ENCODE measurements at regions of chr12 and their contacts with region 1.

Region 1: DNA sequence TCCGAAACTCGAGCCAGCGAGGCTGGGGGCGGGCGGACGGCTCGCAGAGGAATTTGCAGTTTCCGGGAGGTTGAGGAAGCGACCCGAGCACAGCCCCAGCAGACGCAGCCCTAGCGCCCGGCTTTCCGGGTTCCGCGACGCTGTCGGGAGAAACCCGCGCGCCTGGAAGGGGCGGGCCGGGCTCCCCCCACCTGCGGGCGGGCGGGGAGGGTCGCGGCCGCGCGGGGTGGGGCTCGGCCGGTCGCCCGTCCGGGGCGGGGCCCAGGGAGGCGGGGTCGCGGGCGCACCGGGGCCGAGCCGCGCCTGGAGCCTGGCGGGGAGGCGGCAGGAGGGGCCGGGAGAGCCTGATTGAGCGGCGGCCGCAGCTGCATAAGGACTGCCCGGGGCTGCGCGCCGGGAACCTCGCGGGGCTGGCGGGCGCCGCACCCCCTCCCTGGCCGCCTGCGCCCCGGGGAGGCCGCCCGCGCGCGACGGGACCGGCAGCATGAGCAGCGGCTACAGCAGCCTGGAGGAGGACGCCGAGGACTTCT is at the start of gene RASSF3:
- DNase-seq: peak; percentile 94
- H3K4me3 Mint-ChIP-seq: peak within 1 kb of the TSS; percentile 96
- H3K27ac Mint-ChIP-seq: peak within 1 kb of the TSS; percentile 93
- H3K4me1 Mint-ChIP-seq: peaks cover 36% of the 10 kb centered on the region
- H3K27me3 Mint-ChIP-seq: no peaks in the 10 kb centered on the region
- total RNA-seq, gene RASSF3: 40.8 and 43.1 TPM in 2 replicates

Region 2: GRCh38 chr12:64323476-64324225 is 286.6 kb before region 1 on chr12:
- intact Hi-C with region 1: no loop called
- DNase-seq: no peak
- H3K4me3 Mint-ChIP-seq: no peak overlapping the region
- H3K27ac Mint-ChIP-seq: no peak overlapping the region
- H3K4me1 Mint-ChIP-seq: no peaks in the 10 kb centered on the region
- H3K27me3 Mint-ChIP-seq: peaks cover 2% of the 10 kb centered on the region

Region 3: GRCh38 chr12:64544371-64545080 is 65.7 kb before region 1 on chr12:
- intact Hi-C with region 1: loop called (anchors 1 kb)
- DNase-seq: no peak
- H3K4me3 Mint-ChIP-seq: no peak overlapping the region
- H3K27ac Mint-ChIP-seq: no peak overlapping the region
- H3K4me1 Mint-ChIP-seq: peaks cover 2% of the 10 kb centered on the region
- H3K27me3 Mint-ChIP-seq: peaks cover 9% of the 10 kb centered on the region

Region 4: DNA sequence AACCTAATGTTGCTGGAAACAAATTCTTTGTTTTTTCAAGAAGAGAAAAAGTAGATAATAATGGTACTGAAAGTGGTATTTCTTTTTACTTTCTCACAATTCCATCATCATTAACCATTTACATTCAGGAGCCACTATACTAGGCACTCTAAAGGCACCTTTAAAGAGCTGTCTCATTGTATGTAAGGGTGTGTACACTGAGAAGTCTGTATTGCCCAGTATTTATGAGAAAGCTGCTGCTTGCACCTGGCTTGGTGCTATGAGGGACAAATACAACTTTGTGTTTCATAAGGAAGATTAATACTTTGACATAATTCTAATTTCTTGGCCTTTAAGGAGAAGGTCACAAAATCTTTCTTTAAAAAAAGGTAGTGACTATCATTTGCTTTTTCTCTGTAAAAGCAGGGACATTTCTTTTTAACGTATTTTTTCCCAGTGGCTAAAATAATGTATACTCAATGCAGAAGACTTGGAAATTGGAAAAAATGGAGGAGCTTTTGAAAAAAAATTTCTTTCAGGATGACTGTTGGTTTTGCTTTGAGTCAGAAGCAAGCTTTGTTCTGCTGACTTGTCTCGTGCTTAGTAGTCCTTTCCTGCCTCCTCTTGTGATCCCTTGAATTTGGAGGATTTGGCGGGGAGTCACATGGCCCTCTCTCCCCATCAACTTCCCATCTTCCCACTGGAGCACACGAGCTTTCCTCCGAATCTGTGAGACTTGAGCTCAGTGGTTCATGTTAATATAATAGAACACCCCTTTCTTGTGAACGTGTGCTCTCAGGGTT is 50.2 kb after region 1 on chr12:
- intact Hi-C with region 1: loop called (anchors 1 kb)
- DNase-seq: no peak
- H3K4me3 Mint-ChIP-seq: no peak overlapping the region
- H3K27ac Mint-ChIP-seq: peak overlapping the region; percentile 17
- H3K4me1 Mint-ChIP-seq: peaks cover 54% of the 10 kb centered on the region
- H3K27me3 Mint-ChIP-seq: no peaks in the 10 kb centered on the region

Region 5: DNA sequence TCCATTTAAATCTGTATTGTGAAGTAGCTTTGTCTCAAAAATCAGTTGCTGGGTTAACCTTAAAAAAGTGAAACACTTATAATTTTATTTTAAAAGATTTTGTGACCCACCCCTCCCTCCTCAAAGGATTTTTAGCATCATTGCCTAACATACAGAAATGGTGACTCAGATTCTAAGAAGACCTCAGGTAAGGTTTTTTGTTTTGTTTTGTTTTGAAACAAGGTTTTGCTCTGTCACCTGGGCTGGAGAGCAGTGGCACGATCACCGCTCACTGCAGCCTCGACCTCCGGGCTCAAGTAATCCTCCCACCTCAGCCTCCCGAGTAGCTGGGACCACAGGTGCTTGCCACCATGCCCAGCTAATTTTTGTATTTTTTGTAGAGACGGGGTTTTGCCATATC is 74.8 kb after region 1 on chr12:
- intact Hi-C with region 1: loop called (anchors 2 kb)
- DNase-seq: peak; percentile 72
- H3K4me3 Mint-ChIP-seq: peak overlapping the region; percentile 13
- H3K27ac Mint-ChIP-seq: peak overlapping the region; percentile 88
- H3K4me1 Mint-ChIP-seq: peaks cover 72% of the 10 kb centered on the region
- H3K27me3 Mint-ChIP-seq: no peaks in the 10 kb centered on the region

Region 6: GRCh38 chr12:64733857-64734256 is 123.6 kb after region 1 on chr12:
- intact Hi-C with region 1: no loop called
- DNase-seq: no peak
- H3K4me3 Mint-ChIP-seq: no peak overlapping the region
- H3K27ac Mint-ChIP-seq: no peak overlapping the region
- H3K4me1 Mint-ChIP-seq: peaks cover 26% of the 10 kb centered on the region
- H3K27me3 Mint-ChIP-seq: no peaks in the 10 kb centered on the region

Region 7: DNA sequence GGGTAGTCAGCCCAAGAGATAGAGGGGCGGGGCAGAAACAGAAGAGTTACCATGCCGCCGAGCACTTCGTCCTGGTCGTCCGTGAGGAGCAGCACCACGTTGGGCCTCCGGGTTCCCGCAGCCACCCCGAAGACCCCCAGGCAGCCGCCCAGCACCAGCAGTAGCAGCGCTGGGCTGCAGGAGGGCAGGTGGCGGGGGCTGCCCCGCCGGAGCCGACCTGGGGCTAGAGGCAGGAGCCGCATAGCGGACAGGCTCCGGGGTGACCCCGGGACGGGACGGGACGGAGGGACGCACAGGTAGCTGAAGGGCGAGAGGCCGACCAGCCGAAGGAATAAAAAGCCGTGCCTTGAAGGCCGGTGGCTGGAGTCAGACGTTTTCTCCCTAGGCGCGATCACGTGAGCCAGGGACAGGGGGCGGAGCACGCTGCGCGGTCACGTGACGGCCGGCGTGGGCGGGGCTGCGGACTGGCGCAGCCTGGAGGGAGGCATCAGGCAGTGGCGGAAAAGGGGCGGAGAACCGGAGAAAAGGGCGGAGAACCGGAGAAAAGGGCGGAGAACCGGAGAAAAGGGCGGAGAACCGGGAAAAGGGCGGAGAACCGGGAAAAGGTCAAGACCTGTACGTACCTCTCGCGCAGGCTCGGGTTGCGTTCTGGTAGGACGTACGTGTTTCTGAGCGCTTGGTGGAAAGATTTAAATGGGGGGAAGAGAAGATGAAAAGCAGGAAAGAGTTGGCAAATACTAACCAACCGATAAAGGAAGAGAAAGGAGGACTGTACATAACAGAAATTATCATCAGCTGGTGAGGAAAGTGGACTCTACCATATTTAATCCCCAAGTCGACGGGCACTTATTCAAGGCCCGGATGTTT is 149.1 kb after region 1 on chr12 and contains the start of gene GNS:
- intact Hi-C with region 1: loop called (anchors 1 kb)
- DNase-seq: peak; percentile 100
- H3K4me3 Mint-ChIP-seq: peak within 1 kb of the TSS; percentile 90
- H3K27ac Mint-ChIP-seq: peak within 1 kb of the TSS; percentile 92
- H3K4me1 Mint-ChIP-seq: peaks cover 37% of the 10 kb centered on the region
- H3K27me3 Mint-ChIP-seq: peaks cover 6% of the 10 kb centered on the region
- total RNA-seq, gene GNS: 19.9 and 20.5 TPM in 2 replicates

Region 8: DNA sequence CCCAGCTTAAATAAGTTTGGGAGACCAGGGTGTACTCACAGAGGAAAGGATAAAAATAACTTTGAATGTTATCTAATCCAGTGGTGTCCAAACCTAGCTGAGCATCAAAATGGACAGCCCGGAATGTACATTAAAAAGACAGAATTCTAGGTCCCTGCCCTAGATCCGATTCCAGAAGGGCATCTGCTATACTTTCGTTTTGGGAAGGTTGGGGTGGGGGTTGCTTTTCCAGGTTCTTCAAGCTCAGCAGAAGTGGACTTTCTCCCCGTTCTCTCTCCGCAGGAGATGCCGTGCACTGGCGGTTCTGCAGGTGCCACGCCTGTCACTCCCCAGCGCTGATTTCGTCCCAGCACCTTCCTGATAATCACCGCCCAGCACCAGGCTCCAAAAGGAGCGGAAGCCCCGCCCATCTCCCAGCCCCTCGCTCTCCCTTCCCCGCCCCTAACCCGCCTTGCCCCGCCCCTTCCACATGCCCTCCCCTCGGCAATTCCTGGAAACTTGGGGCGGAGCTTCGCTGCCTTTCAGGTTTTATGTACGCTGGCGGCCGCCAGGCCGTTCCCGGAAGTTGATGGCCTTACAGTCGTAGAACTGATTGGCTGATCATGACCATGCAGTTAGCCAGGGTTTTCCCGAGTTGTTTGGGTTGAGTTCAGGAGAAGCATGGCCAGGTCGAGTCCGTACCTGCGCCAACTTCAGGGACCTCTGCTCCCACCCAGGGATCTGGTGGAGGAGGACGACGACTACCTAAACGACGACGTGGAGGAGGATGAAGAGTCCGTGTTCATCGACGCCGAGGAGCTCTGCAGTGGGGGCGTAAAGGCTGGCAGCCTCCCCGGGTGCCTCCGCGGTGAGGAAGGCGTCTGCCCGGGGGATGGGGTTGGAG is 1692.0 kb after region 1 on chr12 and contains the start of gene HELB:
- intact Hi-C with region 1: loop called (anchors 5 kb)
- DNase-seq: peak; percentile 98
- H3K4me3 Mint-ChIP-seq: peak within 1 kb of the TSS; percentile 99
- H3K27ac Mint-ChIP-seq: peak within 1 kb of the TSS; percentile 100
- H3K4me1 Mint-ChIP-seq: peaks cover 45% of the 10 kb centered on the region
- H3K27me3 Mint-ChIP-seq: no peaks in the 10 kb centered on the region
- total RNA-seq, gene HELB: 20.2 and 21.4 TPM in 2 replicates

Measured in activated CD4-positive, alpha-beta T cell treated with anti-CD3 and anti-CD28 coated beads, Interleukin-2, amount 10 ng/mL, durations not matched to agents 24 days and 14 days (primary cell).